ENCODE measurements at regions of chr1 and their contacts with region 1.

Region 1: GRCh38 chr1:58739856-58740466 is 40.1 kb upstream of the MYSM1 start:
- DNase-seq: peak; percentile 42
- ATAC-seq: peak; percentile 83
- H3K4me3 ChIP-seq: no peak overlapping the region
- H3K27ac ChIP-seq: peak overlapping the region; percentile 34; the same call in 1 of the 2 replicates
- H3K4me1 ChIP-seq: peaks cover 4% of the 10 kb centered on the region
- H3K27me3 ChIP-seq: no peaks in the 10 kb centered on the region
- CTCF ChIP-seq: peak; percentile 74; the same call in 1 of the 2 replicates

Region 2: GRCh38 chr1:59071289-59071688 is 331.3 kb after region 1 on chr1:
- CTCF ChIA-PET with region 1: no interaction called
- POLR2A ChIA-PET with region 1: no interaction called
- in situ Hi-C with region 1: no loop called
- intact Hi-C with region 1: no loop called
- DNase-seq: no peak
- ATAC-seq: peak; percentile 84
- H3K4me3 ChIP-seq: peak overlapping the region in 1 of 2 experiments; percentile 10; a peak in 1 of 4 replicates
- H3K27ac ChIP-seq: peak overlapping the region; percentile 48
- H3K4me1 ChIP-seq: no peaks in the 10 kb centered on the region
- H3K27me3 ChIP-seq: no peaks in the 10 kb centered on the region
- CTCF ChIP-seq: no peak

Region 3: DNA sequence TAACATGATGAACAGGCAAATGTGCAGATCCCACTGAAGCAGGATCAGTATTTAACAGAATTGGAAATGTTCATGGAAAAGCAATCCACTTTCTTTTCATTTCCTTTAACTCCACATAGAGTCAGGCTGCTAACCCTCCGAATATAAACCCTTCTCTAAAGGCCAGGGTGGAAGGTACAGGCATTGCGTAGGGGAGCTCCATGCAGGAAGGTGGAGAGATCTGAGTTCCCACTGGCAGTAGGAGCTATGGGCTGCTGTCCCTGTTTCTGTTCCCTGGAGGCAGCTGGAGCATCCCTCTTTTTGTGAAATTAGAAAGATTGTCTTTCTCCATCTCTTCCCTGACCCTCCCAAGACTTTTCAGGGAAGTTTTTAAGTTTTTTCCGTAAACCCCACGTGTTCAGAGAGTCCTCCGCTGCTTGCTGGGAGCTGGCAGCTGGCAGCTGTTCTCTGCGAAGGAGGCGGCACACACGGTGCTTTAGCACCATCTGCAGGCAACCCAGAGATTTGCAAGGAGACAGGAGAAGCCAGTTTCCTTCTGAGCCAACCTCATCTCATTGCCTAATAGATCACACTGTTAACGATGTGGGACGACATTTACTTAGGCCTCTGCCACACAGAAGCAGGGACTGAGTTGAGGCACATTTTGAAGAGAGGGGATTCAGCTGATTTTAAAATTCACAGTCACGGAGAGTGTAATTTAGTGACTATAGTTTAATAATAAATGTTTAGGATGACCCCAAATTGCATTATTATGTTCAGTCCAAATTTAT is 1019.4 kb after region 1 on chr1:
- CTCF ChIA-PET with region 1: interaction called, 5 read pairs
- POLR2A ChIA-PET with region 1: no interaction called
- in situ Hi-C with region 1: no loop called
- intact Hi-C with region 1: loop called (anchors 5 kb)
- DNase-seq: peak; percentile 70
- ATAC-seq: peak; percentile 95
- H3K4me3 ChIP-seq: peak overlapping the region; percentile 2 to 42; a peak in 3 of 4 replicates
- H3K27ac ChIP-seq: 0 out of 2 replicates have a peak overlapping the region, but pooled peaks have one; percentile 8
- H3K4me1 ChIP-seq: no peaks in the 10 kb centered on the region
- H3K27me3 ChIP-seq: no peaks in the 10 kb centered on the region
- CTCF ChIP-seq: peak; percentile 93